ENCODE measurements at regions of chr3 and their contacts with region 1.

Region 1: GRCh38 chr3:112734718-112735350 is 93.9 kb upstream of the CCDC80 start:
- DNase-seq: peak; percentile 73
- H3K4me3 Mint-ChIP-seq: no peak overlapping the region
- H3K27ac Mint-ChIP-seq: no peak overlapping the region
- H3K4me1 Mint-ChIP-seq: peaks cover 42% of the 10 kb centered on the region
- H3K27me3 Mint-ChIP-seq: no peaks in the 10 kb centered on the region

Region 2: DNA sequence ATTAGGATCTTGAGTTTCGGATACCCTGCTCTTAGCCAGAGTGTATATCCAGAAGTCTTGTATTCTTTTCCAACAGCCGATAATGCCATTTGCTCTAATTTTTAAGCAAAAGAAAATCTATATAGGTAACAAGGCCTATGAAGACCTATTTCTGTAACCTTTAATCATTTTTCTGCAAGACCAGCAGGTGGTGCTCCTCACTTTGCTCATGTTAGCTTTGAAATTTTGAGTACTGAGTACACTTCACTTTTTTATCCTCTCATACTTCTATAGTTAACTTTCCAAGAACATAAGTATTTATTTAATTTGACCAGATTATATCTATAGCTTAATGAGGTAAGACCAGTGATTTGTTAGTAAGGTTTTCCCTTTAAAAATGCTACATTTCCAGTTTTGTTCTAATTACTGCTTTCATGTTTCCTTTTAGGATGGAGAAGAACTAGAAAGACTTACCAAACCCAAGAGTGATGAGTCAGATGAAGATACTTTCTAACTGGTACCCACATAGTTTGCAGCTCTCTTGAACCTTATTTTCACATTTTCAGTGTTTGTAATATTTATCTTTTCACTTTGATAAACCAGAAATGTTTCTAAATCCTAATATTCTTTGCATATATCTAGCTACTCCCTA is 152.5 kb before region 1 on chr3:
- CTCF ChIA-PET with region 1: interaction called, 12 read pairs
- DNase-seq: peak; percentile 59
- H3K4me3 Mint-ChIP-seq: no peak overlapping the region
- H3K27ac Mint-ChIP-seq: no peak overlapping the region
- H3K4me1 Mint-ChIP-seq: peaks cover 7% of the 10 kb centered on the region
- H3K27me3 Mint-ChIP-seq: no peaks in the 10 kb centered on the region

Region 3: GRCh38 chr3:112744825-112745566 is 10.2 kb after region 1 on chr3:
- CTCF ChIA-PET with region 1: interaction called, 13 read pairs
- DNase-seq: no peak
- H3K4me3 Mint-ChIP-seq: no peak overlapping the region
- H3K27ac Mint-ChIP-seq: no peak overlapping the region
- H3K4me1 Mint-ChIP-seq: peaks cover 17% of the 10 kb centered on the region
- H3K27me3 Mint-ChIP-seq: no peaks in the 10 kb centered on the region

Region 4: DNA sequence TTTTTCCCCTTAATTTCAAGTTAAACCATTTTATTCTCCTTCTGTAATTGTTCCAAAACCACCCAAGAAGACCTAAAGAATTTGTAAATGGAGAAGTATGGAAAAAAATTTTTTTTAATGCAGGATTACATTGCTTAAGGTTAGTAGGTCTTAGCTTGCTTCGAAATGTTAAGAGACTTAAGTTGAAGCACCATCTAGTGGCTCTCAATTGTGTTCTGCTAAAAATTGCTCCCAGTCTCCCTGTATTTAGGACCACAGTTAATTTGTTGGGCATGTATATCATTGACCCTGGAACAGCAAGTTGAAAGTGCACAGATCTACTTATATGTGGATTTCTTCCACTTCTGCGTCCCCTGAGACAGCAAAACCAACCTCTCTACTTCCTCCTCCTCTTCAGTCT is 79.4 kb after region 1 on chr3:
- CTCF ChIA-PET with region 1: interaction called, 72 read pairs
- DNase-seq: no peak
- H3K4me3 Mint-ChIP-seq: no peak overlapping the region
- H3K27ac Mint-ChIP-seq: no peak overlapping the region
- H3K4me1 Mint-ChIP-seq: peaks cover 13% of the 10 kb centered on the region
- H3K27me3 Mint-ChIP-seq: peaks cover 4% of the 10 kb centered on the region

Region 5: DNA sequence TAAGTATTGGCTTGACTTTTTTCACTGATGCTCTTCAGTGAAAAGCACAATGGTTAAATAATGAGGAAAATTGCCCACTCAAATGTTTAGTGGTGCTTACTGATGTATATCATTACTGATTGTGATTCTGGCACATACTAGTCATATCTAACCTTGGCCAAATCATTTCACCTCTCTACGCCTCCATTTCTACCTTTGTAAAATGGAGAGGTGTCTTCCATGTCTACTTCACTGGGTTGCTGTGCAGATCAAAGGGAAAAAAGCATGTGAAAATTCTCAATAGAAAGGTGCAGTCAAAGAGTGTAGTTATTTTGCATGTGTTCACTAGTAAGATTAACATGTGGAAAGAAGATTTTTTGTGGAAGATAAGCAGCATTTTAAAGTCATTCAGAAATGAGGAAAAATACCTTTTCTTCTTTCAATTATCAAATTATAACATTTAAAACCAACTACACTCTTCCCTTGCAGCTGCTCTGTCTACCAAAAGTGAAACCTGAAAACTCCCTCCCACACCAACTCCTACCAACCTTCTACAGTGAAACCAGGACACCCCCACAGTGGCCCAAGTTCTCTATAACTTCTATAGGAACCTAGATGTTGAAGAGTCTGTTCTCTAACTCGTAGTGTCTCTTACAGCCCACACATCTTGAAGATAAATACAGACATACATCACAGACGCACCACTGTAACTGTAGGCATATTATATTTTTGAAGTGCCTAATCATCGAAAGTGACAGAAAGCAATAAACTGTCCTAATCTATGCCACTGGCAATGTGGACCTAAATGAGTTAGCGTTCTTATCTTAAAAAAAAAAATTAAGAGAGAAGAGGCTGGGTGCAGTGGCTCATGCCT is 238.7 kb after region 1 on chr3:
- CTCF ChIA-PET with region 1: interaction called, 91 read pairs
- DNase-seq: peak; percentile 62
- H3K4me3 Mint-ChIP-seq: peak overlapping the region; percentile 88
- H3K27ac Mint-ChIP-seq: peak overlapping the region; percentile 88
- H3K4me1 Mint-ChIP-seq: peaks cover 67% of the 10 kb centered on the region
- H3K27me3 Mint-ChIP-seq: no peaks in the 10 kb centered on the region

Region 6: GRCh38 chr3:112979240-112979832 is 244.5 kb after region 1 on chr3:
- CTCF ChIA-PET with region 1: interaction called, 91 read pairs
- DNase-seq: no peak
- H3K4me3 Mint-ChIP-seq: no peak overlapping the region
- H3K27ac Mint-ChIP-seq: no peak overlapping the region
- H3K4me1 Mint-ChIP-seq: peaks cover 55% of the 10 kb centered on the region
- H3K27me3 Mint-ChIP-seq: no peaks in the 10 kb centered on the region

Region 7: DNA sequence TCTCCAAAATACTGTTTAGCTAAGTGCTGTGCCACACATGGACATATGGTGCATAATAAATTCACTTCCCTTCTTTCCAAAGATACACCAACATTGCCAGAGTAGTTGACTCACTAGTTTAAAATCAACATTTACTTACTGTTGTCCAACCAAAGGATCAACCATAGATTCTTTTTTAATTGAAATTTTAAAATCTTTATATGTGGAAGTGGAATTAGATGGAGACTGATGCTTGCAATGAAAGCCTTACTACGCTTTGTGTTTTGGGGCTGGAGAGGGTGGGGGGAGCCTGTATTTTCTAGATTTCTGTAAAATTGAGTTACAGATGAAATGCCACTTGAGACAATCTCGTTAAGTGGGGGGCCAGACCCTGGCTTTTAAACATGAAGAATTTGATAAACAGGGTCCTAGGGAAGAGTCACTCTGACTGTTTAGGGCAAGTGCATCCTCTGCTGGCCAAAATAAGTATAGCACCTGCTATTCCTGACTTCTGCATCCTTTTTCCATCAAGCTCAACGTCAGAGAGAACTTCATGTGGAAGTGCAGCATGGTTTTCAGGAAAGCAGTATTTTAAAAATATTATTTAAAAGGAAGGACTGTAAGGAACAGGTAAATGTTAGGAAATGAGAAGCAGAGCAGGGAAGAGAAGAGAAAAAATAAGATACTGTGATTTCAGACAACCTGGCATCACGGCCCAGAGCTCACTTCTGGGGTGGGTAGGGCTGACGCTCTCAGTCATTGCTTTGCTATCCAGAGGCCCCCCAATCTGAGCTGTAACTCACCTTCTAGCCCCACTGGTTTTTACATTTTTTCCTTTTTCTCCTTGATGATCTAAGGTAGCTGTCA is 553.2 kb after region 1 on chr3:
- CTCF ChIA-PET with region 1: interaction called, 10 read pairs
- DNase-seq: peak; percentile 66
- H3K4me3 Mint-ChIP-seq: no peak overlapping the region
- H3K27ac Mint-ChIP-seq: no peak overlapping the region
- H3K4me1 Mint-ChIP-seq: no peaks in the 10 kb centered on the region
- H3K27me3 Mint-ChIP-seq: peaks cover 3% of the 10 kb centered on the region

Measured in activated naive CD4-positive, alpha-beta T cell treated with anti-CD3 and anti-CD28 coated beads, Interleukin-2, amount 10 ng/mL, durations not matched to agents 7 days and 5 days (primary cell).